ENCODE measurements at regions of chr14 and their contacts with region 1.

Region 1: GRCh38 chr14:32076278-32077080 is 625 bp upstream of the ARHGAP5 start:
- DNase-seq: peak; percentile 97
- ATAC-seq: peak; percentile 77
- H3K4me3 ChIP-seq: peak overlapping the region; percentile 93
- H3K27ac ChIP-seq: peak overlapping the region; percentile 90
- H3K4me1 ChIP-seq: peaks cover 32% of the 10 kb centered on the region
- H3K27me3 ChIP-seq: no peaks in the 10 kb centered on the region
- CTCF ChIP-seq: no peak

Region 2: DNA sequence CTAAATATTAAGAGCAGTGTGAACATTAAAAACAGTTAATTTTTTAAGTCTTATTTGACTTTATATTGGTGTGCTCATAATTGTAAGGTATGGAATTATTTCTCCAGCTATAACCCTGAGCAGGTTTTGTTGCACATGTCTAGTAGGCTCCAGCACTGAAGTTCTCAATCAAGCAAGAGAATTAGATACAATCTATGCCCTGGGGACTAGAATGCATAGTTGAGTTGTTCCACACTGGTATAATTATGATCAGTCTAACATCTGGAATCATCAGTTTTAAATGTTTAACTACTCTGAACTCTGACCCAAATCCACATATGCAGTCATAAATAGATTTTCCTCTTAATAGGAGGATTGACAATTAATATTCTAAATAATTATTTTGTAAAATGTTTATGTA is 257.2 kb before region 1 on chr14:
- CTCF ChIA-PET with region 1: no interaction called
- POLR2A ChIA-PET with region 1: no interaction called
- intact Hi-C with region 1: loop called (anchors 10 kb)
- DNase-seq: peak; percentile 12
- ATAC-seq: peak; percentile 64
- H3K4me3 ChIP-seq: no peak overlapping the region
- H3K27ac ChIP-seq: no peak overlapping the region
- H3K4me1 ChIP-seq: peaks cover 14% of the 10 kb centered on the region
- H3K27me3 ChIP-seq: no peaks in the 10 kb centered on the region
- CTCF ChIP-seq: no peak

Region 3: GRCh38 chr14:32009976-32010863 is 66.3 kb before region 1 on chr14:
- CTCF ChIA-PET with region 1: no interaction called
- POLR2A ChIA-PET with region 1: interaction called, 25 read pairs
- intact Hi-C with region 1: loop called (anchors 2 kb)
- DNase-seq: peak; percentile 95
- ATAC-seq: peak; percentile 71
- H3K4me3 ChIP-seq: no peak overlapping the region
- H3K27ac ChIP-seq: peak overlapping the region; percentile 88
- H3K4me1 ChIP-seq: peaks cover 61% of the 10 kb centered on the region
- H3K27me3 ChIP-seq: no peaks in the 10 kb centered on the region
- CTCF ChIP-seq: no peak

Region 4: DNA sequence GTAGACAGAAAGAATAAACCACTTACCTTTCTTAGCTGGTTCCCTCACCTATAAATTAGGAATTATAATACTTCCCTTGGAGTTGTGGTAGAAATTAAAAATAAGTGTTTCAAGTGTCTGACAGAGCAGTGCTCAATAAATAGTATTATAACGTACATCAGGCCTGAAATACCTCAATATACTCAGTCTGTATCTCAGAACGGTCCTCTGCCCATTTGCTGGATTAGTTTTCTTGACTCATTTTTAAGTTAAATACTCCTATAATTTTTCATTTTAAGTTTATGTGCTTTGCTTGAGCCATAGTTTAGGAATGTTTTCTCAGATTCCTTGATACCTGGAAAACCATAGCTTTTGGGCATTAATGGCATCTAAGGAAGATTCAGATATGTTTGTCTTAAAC is 23.0 kb after region 1 on chr14:
- CTCF ChIA-PET with region 1: no interaction called
- POLR2A ChIA-PET with region 1: no interaction called
- intact Hi-C with region 1: no loop called
- DNase-seq: no peak
- ATAC-seq: no peak
- H3K4me3 ChIP-seq: no peak overlapping the region
- H3K27ac ChIP-seq: no peak overlapping the region
- H3K4me1 ChIP-seq: no peaks in the 10 kb centered on the region
- H3K27me3 ChIP-seq: no peaks in the 10 kb centered on the region
- CTCF ChIP-seq: no peak

Region 5: GRCh38 chr14:32134448-32135070 is 58.1 kb after region 1 on chr14:
- CTCF ChIA-PET with region 1: no interaction called
- POLR2A ChIA-PET with region 1: no interaction called
- intact Hi-C with region 1: loop called (anchors 1 kb)
- DNase-seq: peak; percentile 93
- ATAC-seq: peak; percentile 92
- H3K4me3 ChIP-seq: no peak overlapping the region
- H3K27ac ChIP-seq: peak overlapping the region; percentile 79
- H3K4me1 ChIP-seq: peaks cover 23% of the 10 kb centered on the region
- H3K27me3 ChIP-seq: no peaks in the 10 kb centered on the region
- CTCF ChIP-seq: no peak

Region 6: GRCh38 chr14:32252030-32252670 is 175.7 kb after region 1 on chr14:
- CTCF ChIA-PET with region 1: interaction called, 4 read pairs
- POLR2A ChIA-PET with region 1: interaction called, 6 read pairs
- intact Hi-C with region 1: loop called (anchors 1 kb)
- DNase-seq: peak; percentile 85
- ATAC-seq: peak; percentile 79
- H3K4me3 ChIP-seq: no peak overlapping the region
- H3K27ac ChIP-seq: no peak overlapping the region
- H3K4me1 ChIP-seq: peaks cover 9% of the 10 kb centered on the region
- H3K27me3 ChIP-seq: no peaks in the 10 kb centered on the region
- CTCF ChIP-seq: peak; percentile 97

Region 7: DNA sequence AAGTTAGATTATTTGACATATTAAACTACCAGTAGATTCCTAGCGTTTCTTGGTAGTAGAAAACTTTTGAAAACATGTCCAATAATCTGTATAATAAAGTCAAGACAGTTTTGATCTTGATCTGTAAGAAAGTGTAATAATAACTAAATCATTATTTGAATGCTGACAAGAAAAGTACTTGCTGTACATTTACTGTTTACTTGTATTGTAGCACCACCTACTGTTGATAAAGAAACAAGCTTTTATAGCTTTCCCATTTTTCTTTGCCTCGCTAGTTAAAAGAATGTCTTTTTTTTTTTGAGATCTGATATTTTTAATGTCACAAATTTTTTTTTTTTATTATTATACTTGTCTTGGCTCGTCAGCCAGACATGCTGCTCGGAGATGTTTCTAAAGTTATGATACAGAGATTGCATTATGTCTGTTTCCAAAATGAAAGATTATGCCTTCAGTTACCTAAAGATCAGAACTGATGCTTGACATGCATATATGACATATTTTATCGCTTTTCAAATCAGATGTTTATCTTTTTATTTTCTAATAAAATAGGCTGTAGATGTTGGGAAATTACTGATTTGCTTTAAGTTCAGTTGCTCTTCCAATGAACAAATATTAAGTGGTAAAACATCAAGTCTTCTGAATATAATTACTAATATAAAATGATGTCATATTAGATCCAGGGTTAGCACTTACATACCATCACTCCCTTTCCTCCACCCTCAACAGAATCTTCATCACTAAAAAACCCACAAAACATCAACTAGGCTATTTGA is 393.1 kb after region 1 on chr14:
- CTCF ChIA-PET with region 1: no interaction called
- POLR2A ChIA-PET with region 1: interaction called, 12 read pairs
- intact Hi-C with region 1: loop called (anchors 1 kb)
- DNase-seq: peak; percentile 67
- ATAC-seq: peak; percentile 18
- H3K4me3 ChIP-seq: no peak overlapping the region
- H3K27ac ChIP-seq: peak overlapping the region; percentile 23
- H3K4me1 ChIP-seq: peaks cover 57% of the 10 kb centered on the region
- H3K27me3 ChIP-seq: no peaks in the 10 kb centered on the region
- CTCF ChIP-seq: peak; percentile 79